CD4-positive, alpha-beta T cell (primary cell): ENCODE measurements at regions of chr19 and their contacts with region 1.

Region 1: DNA sequence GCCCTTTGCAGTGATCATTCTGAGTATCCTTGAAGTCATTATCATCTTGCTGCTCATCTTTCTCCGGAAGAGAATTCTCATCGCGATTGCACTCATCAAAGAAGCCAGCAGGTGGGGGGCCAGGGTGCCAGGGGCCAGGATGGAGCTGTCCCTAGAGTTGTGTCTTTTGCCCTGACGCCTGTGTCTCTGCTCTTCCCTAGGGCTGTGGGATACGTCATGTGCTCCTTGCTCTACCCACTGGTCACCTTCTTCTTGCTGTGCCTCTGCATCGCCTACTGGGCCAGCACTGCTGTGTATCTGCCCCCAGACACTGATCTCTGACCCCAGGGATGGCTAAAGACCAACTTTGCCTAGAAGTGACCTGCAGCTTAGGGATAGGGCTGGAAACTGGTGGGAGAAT is 9.6 kb downstream of the SLC44A2 start:
- DNase-seq: no peak
- ATAC-seq: no peak
- H3K4me3 ChIP-seq: no peak overlapping the region
- H3K4me3 Mint-ChIP-seq: no peak overlapping the region
- H3K27ac ChIP-seq: no peak overlapping the region
- H3K27ac Mint-ChIP-seq: no peak overlapping the region
- H3K4me1 ChIP-seq: no peaks in the 10 kb centered on the region
- H3K4me1 Mint-ChIP-seq: no peaks in the 10 kb centered on the region
- H3K27me3 ChIP-seq: no peaks in the 10 kb centered on the region
- H3K27me3 Mint-ChIP-seq: no peaks in the 10 kb centered on the region
- CTCF ChIP-seq: no peak

Region 2: DNA sequence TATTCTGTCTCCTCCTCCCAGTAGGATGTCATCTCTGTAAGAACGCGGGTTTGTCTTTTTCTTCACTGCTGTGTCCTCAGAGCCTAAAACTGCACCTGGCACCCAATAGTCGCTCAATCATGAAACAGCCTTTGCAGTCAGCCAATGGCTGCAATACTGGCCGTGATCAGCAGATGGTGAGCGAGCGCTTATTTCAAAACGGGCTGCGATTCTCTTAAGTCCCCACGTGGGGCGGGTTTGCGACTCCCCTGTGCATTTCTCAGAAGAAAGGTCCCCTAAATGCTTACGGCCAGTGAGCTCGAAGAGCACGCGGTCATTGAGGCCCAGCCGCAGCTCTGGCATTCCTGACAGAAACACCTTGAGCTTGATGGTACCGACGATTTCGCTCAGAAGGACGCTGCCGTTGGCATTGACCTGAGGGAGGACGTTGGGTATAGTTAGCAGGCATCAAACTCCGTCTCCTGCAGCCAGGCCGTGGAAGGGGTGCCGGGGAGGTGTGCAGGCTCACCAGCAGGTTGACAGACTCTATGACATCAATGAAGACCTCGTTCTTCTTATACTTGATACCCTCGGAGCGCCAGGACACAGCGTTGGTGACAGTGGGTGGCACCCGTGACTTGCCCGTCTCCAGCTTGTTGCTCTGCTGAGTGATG is 53.9 kb before region 1 on chr19:
- CTCF ChIA-PET with region 1: interaction called, 10 read pairs
- POLR2A ChIA-PET with region 1: no interaction called
- intact Hi-C with region 1: no loop called
- DNase-seq: peak; percentile 81 to 95 (median 89)
- ATAC-seq: peak; percentile 97
- H3K4me3 ChIP-seq: no peak overlapping the region
- H3K4me3 Mint-ChIP-seq: no peak overlapping the region
- H3K27ac ChIP-seq: no peak overlapping the region
- H3K27ac Mint-ChIP-seq: no peak overlapping the region
- H3K4me1 ChIP-seq: peaks cover 18% of the 10 kb centered on the region
- H3K4me1 Mint-ChIP-seq: peaks cover 25% of the 10 kb centered on the region
- H3K27me3 ChIP-seq: no peaks in the 10 kb centered on the region
- H3K27me3 Mint-ChIP-seq: no peaks in the 10 kb centered on the region
- CTCF ChIP-seq: peak; percentile 99